ENCODE measurements at regions of chr9 and their contacts with region 1.

Region 1: DNA sequence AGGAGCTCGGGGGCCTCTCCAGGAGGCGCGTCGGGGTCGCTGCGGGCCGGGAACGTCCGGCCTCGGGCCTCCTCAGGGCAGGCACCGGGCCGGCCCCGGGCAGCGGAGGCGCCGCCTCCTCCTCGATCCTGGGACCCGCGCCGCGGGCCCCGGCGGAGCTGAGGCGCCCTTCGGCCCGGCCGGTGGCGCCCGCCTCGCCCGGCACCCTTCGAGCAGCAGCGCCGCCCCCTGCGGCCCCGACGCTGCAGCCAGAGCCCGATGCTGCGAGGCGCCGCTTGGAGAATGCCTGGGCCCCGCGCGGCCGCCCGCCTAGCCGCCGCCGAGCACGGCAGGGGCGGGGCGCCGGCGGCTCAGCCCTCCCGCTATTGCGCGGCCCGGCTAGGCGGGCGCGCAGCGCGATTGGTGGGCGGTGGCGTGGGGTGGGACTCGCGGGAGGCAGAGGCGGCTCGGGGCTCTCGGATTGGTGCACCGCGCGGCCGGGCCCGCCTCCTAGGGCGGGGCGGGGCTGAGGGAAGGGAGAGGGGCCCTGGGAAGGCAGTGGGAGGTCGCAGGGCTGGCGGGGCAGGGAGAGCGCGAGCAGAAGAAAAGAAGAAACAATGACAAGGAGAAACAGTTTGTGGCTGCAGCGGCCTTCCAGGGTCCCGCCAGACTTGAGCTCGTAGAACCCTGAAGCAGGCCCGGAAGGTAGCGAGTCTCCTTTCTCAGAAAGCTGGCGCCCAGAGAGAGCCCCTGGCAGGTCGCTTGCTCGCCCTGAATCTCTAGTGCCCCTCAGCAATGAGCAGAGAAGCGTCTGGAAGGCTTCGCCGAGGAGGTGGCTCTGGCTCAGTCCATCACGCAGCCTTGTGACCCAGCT is at the start of gene EEIG1:
- DNase-seq: peak; percentile 98
- H3K4me3 ChIP-seq: peak within 1 kb of the TSS; percentile 81 to 97 (median 89)
- H3K27ac ChIP-seq: peak within 1 kb of the TSS; percentile 91 to 97 (median 96)
- H3K4me1 ChIP-seq: peaks cover 44 to 52% (median 49%) of the 10 kb centered on the region in 4 donors
- H3K27me3 ChIP-seq: no peaks in the 10 kb centered on the region
- CTCF ChIP-seq: peak in 1 of 3 experiments; percentile 21
- EP300 ChIP-seq: no peak
- POLR2A ChIP-seq: no peak
- total RNA-seq, gene EEIG1: 12.4 to 29.5 (median 20.0) TPM

Region 2: DNA sequence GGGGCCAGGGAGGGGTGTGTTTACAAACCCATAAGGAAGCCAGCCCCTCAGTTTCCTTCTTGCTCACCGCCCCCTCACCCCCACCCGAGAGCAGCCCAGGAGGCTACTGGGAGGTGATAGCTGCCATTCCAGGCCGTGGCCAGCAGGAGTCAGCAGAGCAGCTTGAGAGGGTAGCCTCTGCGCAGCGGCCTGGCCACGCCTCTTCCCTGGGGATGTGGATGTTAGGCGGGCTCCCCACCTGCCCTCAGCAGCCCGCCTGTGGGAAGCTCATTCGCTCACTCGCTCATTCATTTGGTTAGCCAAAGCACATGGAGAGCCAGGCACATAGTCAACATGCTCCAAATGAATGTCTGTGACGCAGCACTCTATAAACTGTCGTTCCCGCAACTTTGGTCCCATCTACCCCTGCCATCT is 37.2 kb before region 1 on chr9:
- intact Hi-C with region 1: loop called (anchors 5 kb)
- DNase-seq: peak; percentile 94
- H3K4me3 ChIP-seq: no peak overlapping the region
- H3K27ac ChIP-seq: peak overlapping the region in 2 of 4 donors; percentile 38 to 54
- H3K4me1 ChIP-seq: peaks cover 31 to 55% (median 52%) of the 10 kb centered on the region in 4 donors
- H3K27me3 ChIP-seq: no peaks in the 10 kb centered on the region
- CTCF ChIP-seq: peak; percentile 92 to 98 (median 96)
- EP300 ChIP-seq: no peak
- POLR2A ChIP-seq: no peak

Region 3: DNA sequence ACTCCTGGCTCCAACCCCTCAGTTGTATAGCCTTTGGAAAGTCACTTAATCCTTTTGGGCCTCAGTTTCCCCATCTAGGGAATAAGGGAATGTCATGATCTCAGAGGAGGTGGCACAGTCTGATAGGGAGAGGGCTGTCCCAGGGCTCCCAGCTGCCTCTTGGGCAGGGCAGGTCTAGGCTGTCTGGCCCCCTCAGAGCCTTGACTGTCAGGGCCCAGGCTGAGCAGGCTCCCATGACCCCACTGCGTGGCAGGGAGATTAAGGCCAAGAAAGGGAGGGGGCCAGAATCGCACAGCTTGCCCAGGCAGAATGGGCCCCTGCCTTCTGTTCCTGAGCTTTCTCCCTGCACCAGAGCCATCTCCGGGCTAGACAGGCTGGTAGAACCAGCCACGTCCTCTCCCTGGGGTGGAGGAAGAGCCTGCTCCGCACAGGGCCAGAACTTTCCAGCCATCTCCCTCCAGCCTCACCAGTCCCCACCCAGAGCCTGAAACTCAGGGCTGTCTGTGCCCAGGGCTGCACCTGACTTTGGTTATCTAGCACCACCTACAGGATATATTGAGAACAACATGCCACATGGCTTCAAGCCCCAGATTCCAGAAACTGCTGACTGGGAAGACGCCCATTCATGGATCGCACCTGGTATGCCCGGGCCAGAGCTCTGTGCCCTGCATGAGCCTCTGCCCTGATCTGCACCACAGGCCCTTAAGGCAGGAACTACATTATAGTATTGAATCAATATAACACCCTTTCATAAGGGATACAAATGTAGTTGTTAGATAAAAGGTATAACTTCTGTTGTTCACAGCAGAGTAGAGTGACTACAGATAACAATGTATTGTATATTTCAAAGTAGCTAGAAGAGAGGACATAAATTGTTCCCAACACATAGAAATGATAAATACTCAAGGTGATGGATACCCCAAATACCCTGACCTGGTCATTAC is 54.2 kb after region 1 on chr9:
- intact Hi-C with region 1: loop called (anchors 10 kb)
- DNase-seq: peak; percentile 93
- H3K4me3 ChIP-seq: no peak overlapping the region
- H3K27ac ChIP-seq: no peak overlapping the region
- H3K4me1 ChIP-seq: peaks cover 3 to 9% (median 5%) of the 10 kb centered on the region in 4 donors
- H3K27me3 ChIP-seq: no peaks in the 10 kb centered on the region
- CTCF ChIP-seq: peak; percentile 87 to 96 (median 93)
- EP300 ChIP-seq: no peak
- POLR2A ChIP-seq: no peak

Region 4: DNA sequence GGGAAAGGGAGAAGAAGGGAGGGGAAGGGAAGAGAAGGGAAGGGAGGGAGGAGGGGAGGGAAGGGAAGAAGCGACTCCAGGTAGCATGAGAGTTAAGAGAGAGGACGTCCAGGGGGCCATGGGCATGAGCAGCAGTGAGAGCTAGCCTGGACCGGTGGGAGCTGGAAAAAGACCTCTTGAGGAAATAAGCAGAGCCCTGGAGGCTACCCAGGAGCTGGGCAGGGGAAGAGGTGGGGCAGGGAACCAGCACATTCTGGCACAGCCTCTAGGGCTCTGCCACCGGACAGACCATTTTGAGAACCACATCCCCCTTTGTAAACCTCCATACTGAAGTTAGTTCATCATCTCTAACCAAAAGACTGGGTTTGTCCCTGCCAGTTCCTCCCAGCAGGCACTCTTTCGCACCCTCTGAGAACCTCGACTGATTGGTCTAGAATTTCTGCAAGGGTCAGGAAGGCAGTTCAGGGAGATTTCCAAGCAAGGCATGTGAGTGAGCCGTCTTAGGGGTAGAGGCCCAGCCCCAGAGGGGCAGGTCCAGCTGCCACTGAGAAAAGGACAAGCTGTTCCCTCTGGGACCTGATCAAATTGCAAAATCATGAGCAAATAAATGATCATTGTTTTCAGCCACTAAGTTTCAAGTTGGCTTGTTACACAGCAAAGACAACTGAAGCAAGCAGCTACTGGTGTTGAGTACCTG is 74.6 kb after region 1 on chr9:
- intact Hi-C with region 1: no loop called
- DNase-seq: no peak
- H3K4me3 ChIP-seq: no peak overlapping the region
- H3K27ac ChIP-seq: peak overlapping the region; percentile 75 to 83 (median 78)
- H3K4me1 ChIP-seq: peaks cover 12 to 38% (median 31%) of the 10 kb centered on the region in 4 donors
- H3K27me3 ChIP-seq: no peaks in the 10 kb centered on the region
- CTCF ChIP-seq: no peak
- EP300 ChIP-seq: no peak
- POLR2A ChIP-seq: peak; percentile 23

Region 5: DNA sequence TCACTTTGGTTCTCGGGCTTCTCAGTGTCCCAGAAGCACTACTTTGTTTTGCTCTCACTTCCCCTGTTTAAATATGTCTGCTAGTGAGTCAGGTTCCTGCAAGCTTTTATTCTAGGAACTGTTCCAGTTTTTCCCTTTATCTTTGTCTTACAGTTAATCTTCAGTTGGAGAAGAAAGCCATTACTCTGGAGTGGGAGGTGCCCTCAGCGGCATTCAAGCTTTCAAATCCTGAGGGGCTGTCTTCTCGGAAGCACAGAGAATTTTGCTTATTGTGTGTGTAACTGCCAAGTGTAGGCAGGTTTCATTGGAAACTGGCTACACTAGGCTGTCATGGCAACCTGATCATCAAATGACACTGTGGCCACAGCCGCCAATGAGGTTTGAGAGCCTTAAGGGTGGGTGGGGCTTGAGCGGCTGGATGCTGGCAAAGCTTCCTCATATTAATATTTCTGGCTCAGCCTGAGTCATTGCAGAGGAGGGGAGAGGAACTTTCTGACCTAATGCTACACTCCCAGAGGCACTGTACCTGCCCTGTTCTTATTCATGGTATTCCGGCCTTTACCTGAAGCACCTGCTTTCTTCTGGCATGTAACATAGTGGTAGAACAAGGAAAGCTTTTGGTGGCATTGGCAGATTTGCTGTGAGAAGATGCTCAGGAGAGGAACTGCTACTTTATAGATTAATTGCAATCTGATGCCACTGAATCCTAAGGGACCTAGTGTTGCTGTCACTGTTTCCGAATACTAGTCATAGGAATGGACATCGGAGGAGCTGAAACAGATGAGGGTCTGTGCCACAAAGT is 113.4 kb after region 1 on chr9:
- intact Hi-C with region 1: loop called (anchors 10 kb)
- DNase-seq: peak; percentile 99
- H3K4me3 ChIP-seq: peak overlapping the region; percentile 31 to 40 (median 36)
- H3K27ac ChIP-seq: peak overlapping the region; percentile 93 to 97 (median 96)
- H3K4me1 ChIP-seq: peaks cover 63 to 88% (median 82%) of the 10 kb centered on the region in 4 donors
- H3K27me3 ChIP-seq: no peaks in the 10 kb centered on the region
- CTCF ChIP-seq: no peak
- EP300 ChIP-seq: peak; percentile 76
- POLR2A ChIP-seq: peak; percentile 42

Region 6: GRCh38 chr9:128310461-128310860 is 329.5 kb after region 1 on chr9:
- intact Hi-C with region 1: no loop called
- DNase-seq: no peak
- H3K4me3 ChIP-seq: no peak overlapping the region
- H3K27ac ChIP-seq: no peak overlapping the region
- H3K4me1 ChIP-seq: no peaks in the 10 kb centered on the region
- H3K27me3 ChIP-seq: no peaks in the 10 kb centered on the region
- CTCF ChIP-seq: no peak
- EP300 ChIP-seq: no peak
- POLR2A ChIP-seq: no peak